Thyroid gland (tissue), 4 donors: ENCODE measurements at regions of chr1 and their contacts with region 1.

Region 1: GRCh38 chr1:203006948-203007871 is at the start of gene TMEM183A:
- DNase-seq: peak; percentile 96 to 97
- H3K4me3 ChIP-seq: peak within 1 kb of the TSS; percentile 38 to 80 (median 78)
- H3K27ac ChIP-seq: peak within 1 kb of the TSS; percentile 70 to 90 (median 83)
- H3K4me1 ChIP-seq: peaks cover 6 to 9% of the 10 kb centered on the region in 2 donors
- H3K27me3 ChIP-seq: no peaks in the 10 kb centered on the region
- CTCF ChIP-seq: no peak
- POLR2A ChIP-seq: peak; percentile 52 to 94
- total RNA-seq, gene TMEM183A: 71.0 to 93.9 (median 84.2) TPM

Region 2: GRCh38 chr1:202807926-202808757 is 199.1 kb before region 1 on chr1 and contains the start of gene KDM5B:
- intact Hi-C with region 1: no loop called
- DNase-seq: peak; percentile 63 to 64
- H3K4me3 ChIP-seq: peak within 1 kb of the TSS; percentile 89 to 99 (median 95)
- H3K27ac ChIP-seq: peak within 1 kb of the TSS; percentile 50 to 85 (median 84)
- H3K4me1 ChIP-seq: peaks cover 20% of the 10 kb centered on the region in 2 donors
- H3K27me3 ChIP-seq: no peaks in the 10 kb centered on the region
- CTCF ChIP-seq: peak in 1 of 6 experiments; percentile 3
- POLR2A ChIP-seq: peak; percentile 40 to 91
- total RNA-seq, gene KDM5B: 53.1 to 78.5 (median 61.2) TPM

Region 3: DNA sequence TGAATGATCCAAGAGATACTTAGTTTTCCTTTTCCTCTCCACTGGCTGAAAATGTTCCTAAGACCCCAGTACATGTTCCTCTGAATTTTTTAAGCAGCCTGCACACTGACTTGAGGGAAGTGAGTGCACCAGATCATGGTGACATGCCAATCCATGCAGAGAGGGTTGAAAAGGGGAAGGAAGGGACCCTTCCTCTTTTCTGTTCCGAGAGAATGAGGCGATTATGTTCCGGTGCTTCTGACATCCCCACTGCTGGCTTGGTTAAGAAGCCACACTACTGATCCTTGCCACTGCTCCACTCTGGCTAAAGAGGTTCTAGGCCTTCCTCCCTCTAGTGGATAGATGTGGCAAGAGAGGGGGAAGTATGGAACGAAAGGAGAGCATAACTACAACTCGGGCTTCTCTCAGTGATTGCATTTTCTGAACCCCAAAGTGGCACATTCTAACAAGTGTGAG is 38.3 kb before region 1 on chr1:
- intact Hi-C with region 1: loop called (anchors 5 kb)
- DNase-seq: peak; percentile 14 to 21
- H3K4me3 ChIP-seq: no peak overlapping the region
- H3K27ac ChIP-seq: no peak overlapping the region
- H3K4me1 ChIP-seq: peaks cover 8 to 11% of the 10 kb centered on the region in 2 donors
- H3K27me3 ChIP-seq: no peaks in the 10 kb centered on the region
- CTCF ChIP-seq: peak in 5 of 6 experiments; percentile 22 to 48 (median 40)
- POLR2A ChIP-seq: peak in 1 of 2 donors; percentile 9